ENCODE measurements at regions of chr10 and their contacts with region 1.

Region 1: GRCh38 chr10:73940634-73941221 is 29.8 kb downstream of the PLAU start:
- DNase-seq: peak; percentile 78 to 85 (median 79)
- H3K4me3 ChIP-seq: no peak overlapping the region
- H3K4me3 Mint-ChIP-seq: peak overlapping the region in 7 of 8 donors; percentile 49 to 79 (median 66)
- H3K27ac ChIP-seq: no peak overlapping the region
- H3K27ac Mint-ChIP-seq: peak overlapping the region in 5 of 7 donors; percentile 37 to 82 (median 74)
- H3K4me1 ChIP-seq: peaks cover 10% of the 10 kb centered on the region
- H3K4me1 Mint-ChIP-seq: peaks cover 6 to 9% (median 8%) of the 10 kb centered on the region in 4 donors
- H3K27me3 ChIP-seq: no peaks in the 10 kb centered on the region
- H3K27me3 Mint-ChIP-seq: peaks cover 0 to 2% of the 10 kb centered on the region in 2 donors

Region 2: GRCh38 chr10:73731588-73732375 is 208.9 kb before region 1 on chr10:
- CTCF ChIA-PET with region 1: no interaction called
- POLR2A ChIA-PET with region 1: no interaction called
- intact Hi-C with region 1: no loop called
- DNase-seq: no peak
- H3K4me3 ChIP-seq: no peak overlapping the region
- H3K4me3 Mint-ChIP-seq: peak overlapping the region in 7 of 8 donors; percentile 52 to 100 (median 64)
- H3K27ac ChIP-seq: no peak overlapping the region
- H3K27ac Mint-ChIP-seq: peak overlapping the region in 4 of 7 donors; percentile 36 to 97 (median 53)
- H3K4me1 ChIP-seq: peaks cover 15% of the 10 kb centered on the region
- H3K4me1 Mint-ChIP-seq: peaks cover 12 to 38% (median 21%) of the 10 kb centered on the region in 4 donors
- H3K27me3 ChIP-seq: no peaks in the 10 kb centered on the region
- H3K27me3 Mint-ChIP-seq: no peaks in the 10 kb centered on the region

Region 3: GRCh38 chr10:73848821-73849489 is 91.8 kb before region 1 on chr10:
- CTCF ChIA-PET with region 1: interaction called, 40 read pairs
- POLR2A ChIA-PET with region 1: interaction called, 7 read pairs
- intact Hi-C with region 1: loop called (anchors 1 kb)
- DNase-seq: peak; percentile 87 to 92 (median 89)
- H3K4me3 ChIP-seq: no peak overlapping the region
- H3K4me3 Mint-ChIP-seq: peak overlapping the region in 5 of 8 donors; percentile 26 to 59 (median 27)
- H3K27ac ChIP-seq: peak overlapping the region; percentile 46
- H3K27ac Mint-ChIP-seq: peak overlapping the region; percentile 83 to 96 (median 94)
- H3K4me1 ChIP-seq: peaks cover 8% of the 10 kb centered on the region
- H3K4me1 Mint-ChIP-seq: peaks cover 14 to 28% (median 16%) of the 10 kb centered on the region in 4 donors
- H3K27me3 ChIP-seq: no peaks in the 10 kb centered on the region
- H3K27me3 Mint-ChIP-seq: no peaks in the 10 kb centered on the region

Region 4: DNA sequence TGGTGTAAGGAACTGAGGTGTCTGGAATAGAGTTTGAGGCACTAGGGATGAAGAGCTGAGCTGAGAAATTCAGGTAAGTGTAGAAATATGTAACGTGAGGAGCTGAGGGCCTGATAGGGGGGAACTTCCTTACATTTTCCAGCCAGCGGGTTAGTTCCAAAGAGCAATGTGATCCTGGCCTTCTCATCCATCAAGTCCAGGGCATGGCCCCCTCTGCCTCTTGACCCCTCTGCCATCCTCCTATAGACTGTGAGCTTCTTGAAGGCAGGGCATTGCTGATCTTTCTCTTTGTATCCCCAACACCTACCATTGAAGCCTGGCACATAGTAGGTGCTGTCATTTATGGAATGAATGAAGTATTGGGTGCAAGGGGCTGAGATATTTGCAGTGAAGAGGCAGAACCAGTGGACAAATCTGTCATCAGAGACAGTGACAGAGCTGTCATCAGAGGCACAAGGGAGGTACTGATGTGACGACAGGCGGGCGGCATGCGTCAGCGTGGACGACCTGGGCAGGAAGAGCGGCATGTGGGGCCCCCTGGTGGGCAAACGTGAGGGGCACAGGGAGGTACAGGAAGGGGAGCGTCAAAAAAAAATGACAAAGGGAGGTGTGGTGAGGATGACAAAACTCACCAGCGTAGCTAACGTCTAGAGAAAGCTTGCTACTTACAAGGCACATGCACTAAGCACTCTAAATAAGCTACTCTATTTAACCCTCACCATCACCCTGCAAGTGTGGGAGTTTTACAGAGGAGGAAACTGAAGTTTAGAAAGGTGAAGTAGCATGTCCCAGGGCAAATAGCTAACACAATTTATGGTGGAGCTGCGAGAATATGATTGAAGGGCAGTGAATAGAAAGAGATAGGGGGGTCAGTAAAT is 61.2 kb before region 1 on chr10:
- CTCF ChIA-PET with region 1: interaction called, 726 read pairs
- POLR2A ChIA-PET with region 1: interaction called, 6 read pairs
- intact Hi-C with region 1: loop called (anchors 2 kb)
- DNase-seq: peak; percentile 95 to 96 (median 96)
- H3K4me3 ChIP-seq: no peak overlapping the region
- H3K4me3 Mint-ChIP-seq: peak overlapping the region in 2 of 8 donors; percentile 12 to 52
- H3K27ac ChIP-seq: peak overlapping the region; percentile 50
- H3K27ac Mint-ChIP-seq: peak overlapping the region; percentile 56 to 99 (median 95)
- H3K4me1 ChIP-seq: peaks cover 37% of the 10 kb centered on the region
- H3K4me1 Mint-ChIP-seq: peaks cover 17 to 47% (median 31%) of the 10 kb centered on the region in 4 donors
- H3K27me3 ChIP-seq: no peaks in the 10 kb centered on the region
- H3K27me3 Mint-ChIP-seq: no peaks in the 10 kb centered on the region

Region 5: GRCh38 chr10:73910764-73911552 is 29.8 kb before region 1 on chr10 and contains the start of gene PLAU:
- CTCF ChIA-PET with region 1: interaction called, 8 read pairs
- POLR2A ChIA-PET with region 1: interaction called, 11 read pairs
- intact Hi-C with region 1: no loop called
- DNase-seq: peak; percentile 31 to 50 (median 38)
- H3K4me3 ChIP-seq: peak within 1 kb of the TSS; percentile 11 to 44
- H3K4me3 Mint-ChIP-seq: peak within 1 kb of the TSS; percentile 89 to 95 (median 92)
- H3K27ac ChIP-seq: no peak within 1 kb of the TSS
- H3K27ac Mint-ChIP-seq: peak within 1 kb of the TSS in 2 of 7 donors; percentile 29 to 41
- H3K4me1 ChIP-seq: peaks cover 29% of the 10 kb centered on the region
- H3K4me1 Mint-ChIP-seq: peaks cover 16 to 36% (median 25%) of the 10 kb centered on the region in 4 donors
- H3K27me3 ChIP-seq: peaks cover 13% of the 10 kb centered on the region
- H3K27me3 Mint-ChIP-seq: peaks cover 20 to 24% of the 10 kb centered on the region in 2 donors
- total RNA-seq, gene PLAU: 0.64 to 0.91 TPM

Region 6: GRCh38 chr10:73956476-73957359 is 16.0 kb after region 1 on chr10:
- CTCF ChIA-PET with region 1: interaction called, 50 read pairs
- POLR2A ChIA-PET with region 1: interaction called, 19 read pairs
- intact Hi-C with region 1: no loop called
- DNase-seq: peak; percentile 64 to 78 (median 72)
- H3K4me3 ChIP-seq: peak overlapping the region; percentile 4 to 30
- H3K4me3 Mint-ChIP-seq: peak overlapping the region; percentile 66 to 94 (median 86)
- H3K27ac ChIP-seq: peak overlapping the region; percentile 52
- H3K27ac Mint-ChIP-seq: peak overlapping the region; percentile 94 to 99 (median 97)
- H3K4me1 ChIP-seq: peaks cover 70% of the 10 kb centered on the region
- H3K4me1 Mint-ChIP-seq: peaks cover 43 to 64% (median 54%) of the 10 kb centered on the region in 4 donors
- H3K27me3 ChIP-seq: no peaks in the 10 kb centered on the region
- H3K27me3 Mint-ChIP-seq: no peaks in the 10 kb centered on the region

Region 7: GRCh38 chr10:73997787-73998622 is 57.3 kb after region 1 on chr10 and contains the start of gene VCL:
- CTCF ChIA-PET with region 1: interaction called, 20 read pairs
- POLR2A ChIA-PET with region 1: interaction called, 5 read pairs
- intact Hi-C with region 1: no loop called
- DNase-seq: peak; percentile 95 to 96 (median 95)
- H3K4me3 ChIP-seq: peak within 1 kb of the TSS; percentile 76 to 94
- H3K4me3 Mint-ChIP-seq: peak within 1 kb of the TSS; percentile 99 to 100 (median 100)
- H3K27ac ChIP-seq: peak within 1 kb of the TSS; percentile 87
- H3K27ac Mint-ChIP-seq: peak within 1 kb of the TSS; percentile 81 to 100 (median 99)
- H3K4me1 ChIP-seq: peaks cover 57% of the 10 kb centered on the region
- H3K4me1 Mint-ChIP-seq: peaks cover 33 to 69% (median 51%) of the 10 kb centered on the region in 4 donors
- H3K27me3 ChIP-seq: no peaks in the 10 kb centered on the region
- H3K27me3 Mint-ChIP-seq: no peaks in the 10 kb centered on the region
- total RNA-seq, gene VCL: 29.6 TPM